K562 (cell line): ENCODE measurements at regions of chr5 and their contacts with region 1.

Region 1: GRCh38 chr5:34486160-34486848 is 169.8 kb upstream of the RAI14 start:
- DNase-seq: peak; percentile 73 to 89 (median 76)
- ATAC-seq: peak; percentile 87
- H3K4me3 ChIP-seq: no peak overlapping the region
- H3K27ac ChIP-seq: no peak overlapping the region
- H3K4me1 ChIP-seq: peaks cover 0 to 5% of the 10 kb centered on the region in 2 experiments; a peak in 2 of 5 replicates
- H3K27me3 ChIP-seq: peaks cover 14 to 25% of the 10 kb centered on the region in 2 experiments
- CTCF ChIP-seq: peak; percentile 83 to 98 (median 89)
- EP300 ChIP-seq: 0 out of 2 replicates have a peak, but pooled peaks have one; percentile 17
- POLR2A ChIP-seq: no peak
- RAD21 ChIP-seq: peak; percentile 92 to 93

Region 2: DNA sequence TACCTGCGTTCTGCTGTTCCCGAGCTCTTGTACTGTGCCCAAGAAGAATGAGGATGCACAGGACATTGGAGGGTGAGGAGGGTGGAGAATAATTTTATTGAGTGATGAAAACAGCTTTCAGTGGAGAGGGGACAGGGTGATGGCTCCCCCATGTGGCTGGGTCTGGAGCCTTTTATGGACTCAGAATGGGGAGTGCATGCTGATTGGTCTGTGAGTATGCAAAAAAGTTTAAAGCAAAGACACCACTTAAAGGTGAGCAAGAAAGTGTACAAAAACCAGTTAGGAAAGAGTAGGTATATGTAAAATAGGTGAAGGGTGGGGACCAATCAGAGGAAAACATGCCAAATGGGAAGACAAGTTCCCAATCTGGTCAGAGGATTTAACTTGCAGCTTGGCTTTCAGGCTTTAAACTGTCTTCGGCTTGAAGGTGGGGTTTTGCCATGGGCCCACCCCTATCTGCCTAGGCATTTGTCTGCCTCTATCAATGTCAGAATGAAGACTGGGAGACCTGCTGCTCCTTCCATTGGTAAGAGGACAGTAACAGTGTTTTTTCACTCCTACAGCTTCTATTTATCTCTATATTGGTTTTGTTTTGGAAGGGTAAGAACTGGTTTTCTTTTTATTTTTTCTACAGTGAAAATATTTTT is 51.8 kb after region 1 on chr5:
- CTCF ChIA-PET with region 1: interaction called, 16 read pairs
- POLR2A ChIA-PET with region 1: no interaction called
- in situ Hi-C with region 1: no loop called
- intact Hi-C with region 1: loop called (anchors 2 kb)
- DNase-seq: peak; percentile 48 to 73 (median 55)
- ATAC-seq: peak; percentile 97
- H3K4me3 ChIP-seq: no peak overlapping the region
- H3K27ac ChIP-seq: no peak overlapping the region
- H3K4me1 ChIP-seq: peaks cover 0 to 3% of the 10 kb centered on the region in 2 experiments; a peak in 1 of 5 replicates
- H3K27me3 ChIP-seq: no peaks in the 10 kb centered on the region
- CTCF ChIP-seq: peak; percentile 71 to 83 (median 81)
- EP300 ChIP-seq: no peak
- POLR2A ChIP-seq: no peak
- RAD21 ChIP-seq: peak; percentile 64 to 78

Region 3: DNA sequence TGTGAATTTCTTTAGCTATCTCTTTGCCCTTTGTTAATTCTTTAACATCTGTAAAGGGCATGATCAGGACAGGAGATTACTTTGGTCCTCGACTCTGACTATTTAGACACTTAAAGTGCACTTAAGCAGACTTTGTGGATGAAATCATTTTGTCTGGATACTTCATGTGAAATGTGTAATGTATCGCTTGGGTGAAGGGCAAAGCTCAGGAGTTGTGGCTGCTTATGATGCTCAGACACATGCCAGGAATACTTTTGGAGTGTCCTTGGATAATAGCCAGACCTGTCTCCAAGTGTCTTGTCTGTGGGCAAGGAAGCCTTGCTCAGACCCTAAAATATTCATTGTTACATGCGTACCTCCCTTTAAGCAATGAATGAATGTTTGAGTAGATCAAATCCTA is 257.6 kb after region 1 on chr5:
- CTCF ChIA-PET with region 1: no interaction called
- POLR2A ChIA-PET with region 1: no interaction called
- in situ Hi-C with region 1: no loop called
- intact Hi-C with region 1: no loop called
- DNase-seq: no peak
- ATAC-seq: no peak
- H3K4me3 ChIP-seq: no peak overlapping the region
- H3K27ac ChIP-seq: no peak overlapping the region
- H3K4me1 ChIP-seq: no peaks in the 10 kb centered on the region
- H3K27me3 ChIP-seq: no peaks in the 10 kb centered on the region
- CTCF ChIP-seq: no peak
- EP300 ChIP-seq: no peak
- POLR2A ChIP-seq: no peak
- RAD21 ChIP-seq: no peak

Region 4: GRCh38 chr5:35003018-35003957 is 517.0 kb after region 1 on chr5:
- CTCF ChIA-PET with region 1: interaction called, 10 read pairs
- POLR2A ChIA-PET with region 1: no interaction called
- in situ Hi-C with region 1: no loop called
- intact Hi-C with region 1: loop called (anchors 1 kb)
- DNase-seq: peak; percentile 78 to 82 (median 82)
- ATAC-seq: peak; percentile 96
- H3K4me3 ChIP-seq: no peak overlapping the region
- H3K27ac ChIP-seq: no peak overlapping the region
- H3K4me1 ChIP-seq: no peaks in the 10 kb centered on the region; a peak in 1 of 5 replicates
- H3K27me3 ChIP-seq: peaks cover 5 to 16% of the 10 kb centered on the region in 2 experiments; a peak in 3 of 5 replicates
- CTCF ChIP-seq: peak; percentile 85 to 96 (median 96)
- EP300 ChIP-seq: no peak
- POLR2A ChIP-seq: no peak
- RAD21 ChIP-seq: peak; percentile 66 to 77

Region 5: DNA sequence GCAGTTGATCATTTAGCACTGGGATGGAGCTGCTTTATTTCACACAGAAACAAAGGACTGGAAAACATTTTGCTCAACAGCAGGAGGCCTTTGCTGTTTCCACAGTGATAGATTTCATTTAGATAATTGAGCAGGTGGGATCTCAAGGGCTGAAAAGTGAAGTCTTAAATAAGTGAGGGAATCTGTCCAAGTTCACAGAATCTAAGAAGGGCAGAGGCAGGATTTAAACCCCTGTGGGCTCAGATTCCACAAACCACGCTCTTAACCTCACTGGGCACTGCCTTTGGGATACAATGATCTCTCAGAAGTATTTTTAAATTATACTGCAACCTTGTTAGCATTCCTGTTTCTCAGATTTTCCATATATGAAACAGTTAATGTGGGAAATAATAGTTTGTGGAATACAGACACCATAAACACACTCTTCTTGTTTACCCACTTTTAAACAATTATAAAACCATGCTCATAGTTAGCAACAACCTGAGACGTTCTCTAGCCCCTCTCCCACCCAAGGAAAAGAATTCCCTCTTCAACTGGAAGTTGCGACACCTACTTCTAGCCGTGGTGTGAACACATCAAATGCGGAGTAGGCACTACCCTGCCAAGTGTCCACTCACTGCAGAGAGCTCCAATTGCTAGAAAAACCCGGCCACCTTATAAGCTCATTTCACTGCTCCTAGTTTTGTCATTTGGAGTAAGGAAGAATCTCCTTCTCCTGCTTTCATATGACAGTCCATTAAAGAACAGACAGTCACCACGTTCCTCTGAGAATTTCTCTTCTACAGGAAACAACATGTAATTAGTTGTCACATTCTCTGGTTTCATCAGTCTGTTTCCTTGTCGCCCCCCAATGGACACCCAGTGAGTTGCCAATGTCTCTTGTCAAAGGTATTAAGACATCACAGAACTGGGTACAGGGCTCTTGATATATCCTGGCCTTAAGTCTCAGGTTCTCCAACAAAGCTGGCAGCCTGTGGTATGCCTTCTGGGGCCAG is 696.5 kb after region 1 on chr5:
- CTCF ChIA-PET with region 1: no interaction called
- POLR2A ChIA-PET with region 1: no interaction called
- in situ Hi-C with region 1: loop called (anchors 25 kb)
- intact Hi-C with region 1: no loop called
- DNase-seq: peak in 3 of 4 experiments; percentile 21 to 45 (median 34)
- ATAC-seq: peak; percentile 94
- H3K4me3 ChIP-seq: no peak overlapping the region
- H3K27ac ChIP-seq: no peak overlapping the region
- H3K4me1 ChIP-seq: no peaks in the 10 kb centered on the region
- H3K27me3 ChIP-seq: peaks cover 0 to 1% of the 10 kb centered on the region in 2 experiments; a peak in 2 of 5 replicates
- CTCF ChIP-seq: peak; percentile 62 to 67 (median 66)
- EP300 ChIP-seq: no peak
- POLR2A ChIP-seq: no peak
- RAD21 ChIP-seq: peak; percentile 30 to 54; a peak in 3 of 4 replicates

Region 6: DNA sequence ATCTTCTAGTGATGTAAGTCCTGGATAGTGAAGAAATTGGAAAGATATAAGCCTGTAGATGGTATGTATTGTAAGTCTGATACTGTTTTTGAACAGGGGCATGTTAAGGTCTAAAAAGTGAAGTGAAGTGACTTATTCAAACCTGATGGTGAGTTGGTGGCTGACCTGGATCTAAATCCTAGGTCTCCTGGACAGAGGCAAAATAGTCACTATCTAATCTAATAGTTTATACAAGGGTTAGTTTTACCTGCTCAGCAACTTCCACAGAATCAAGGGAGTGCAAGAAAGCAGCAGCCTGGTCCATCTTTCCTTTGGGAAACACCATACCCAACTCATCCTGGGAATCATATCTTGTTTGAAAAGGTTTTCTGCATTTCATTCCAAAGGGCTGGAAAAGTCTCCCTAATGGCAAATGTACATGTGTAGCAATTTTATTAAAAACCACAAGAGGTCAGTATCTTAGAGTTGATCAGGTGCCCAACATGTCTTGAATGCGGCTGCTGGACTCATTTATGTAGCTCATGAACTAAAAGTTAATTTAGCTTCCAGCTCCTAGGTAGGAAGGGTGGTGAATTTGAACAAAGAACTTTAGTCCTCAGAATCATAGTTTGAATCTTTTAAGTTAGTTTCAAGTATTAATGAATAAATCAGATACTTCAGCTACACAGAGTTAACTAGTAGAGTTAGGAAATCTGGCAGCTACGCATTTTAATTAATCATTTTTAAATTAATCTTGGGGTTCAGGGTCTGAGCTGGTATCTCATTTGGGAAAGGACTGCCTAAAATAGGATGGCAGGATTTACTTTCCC is 1691.6 kb after region 1 on chr5:
- CTCF ChIA-PET with region 1: no interaction called
- POLR2A ChIA-PET with region 1: no interaction called
- in situ Hi-C with region 1: no loop called
- intact Hi-C with region 1: no loop called
- DNase-seq: peak in 2 of 4 experiments; percentile 17 to 37
- ATAC-seq: peak; percentile 81
- H3K4me3 ChIP-seq: no peak overlapping the region
- H3K27ac ChIP-seq: no peak overlapping the region
- H3K4me1 ChIP-seq: no peaks in the 10 kb centered on the region
- H3K27me3 ChIP-seq: no peaks in the 10 kb centered on the region
- CTCF ChIP-seq: peak; percentile 36 to 65 (median 52); a peak in 5 of 6 replicates
- EP300 ChIP-seq: no peak
- POLR2A ChIP-seq: no peak
- RAD21 ChIP-seq: peak; percentile 43 to 70